ENCODE measurements at regions of chr17 and their contacts with region 1.

Region 1: DNA sequence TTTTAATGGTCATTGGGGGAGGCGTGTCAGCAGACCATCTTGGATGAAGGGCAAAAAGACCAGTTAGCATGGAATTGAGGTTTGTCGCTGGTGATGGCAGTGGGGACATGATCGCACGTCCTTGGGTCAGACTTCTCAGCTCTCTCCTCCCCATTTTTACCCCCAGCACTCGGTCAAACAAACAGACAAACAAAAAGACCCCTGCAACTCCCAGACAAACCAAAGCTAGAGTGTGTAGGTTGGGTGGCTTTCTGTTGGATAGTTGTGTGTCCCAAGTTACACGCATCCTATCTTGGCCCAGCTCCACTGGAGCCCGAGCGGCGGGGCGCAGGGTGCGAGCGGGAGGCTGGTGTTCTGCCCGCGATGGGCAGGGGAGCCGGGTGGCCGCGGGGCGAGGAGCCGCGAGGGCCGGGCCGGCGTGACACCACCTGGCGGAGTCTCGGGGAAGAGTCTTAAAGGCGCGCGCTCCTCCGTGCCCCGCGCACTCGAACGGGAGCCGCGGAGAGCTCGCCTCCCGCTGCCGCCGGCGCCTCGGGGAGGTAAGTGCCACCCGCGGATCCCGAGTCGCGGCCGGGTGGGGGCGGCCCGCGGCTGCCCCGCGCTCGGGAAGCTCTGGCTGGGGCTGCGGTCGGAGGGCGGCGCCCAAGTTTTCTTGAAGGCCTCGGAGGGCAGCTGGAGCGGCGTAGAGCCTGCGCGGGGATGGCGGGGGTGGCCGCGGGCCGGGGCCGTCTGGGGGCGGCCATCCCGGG is 18.5 kb upstream of the NTN1 start:
- DNase-seq: no peak
- H3K4me3 ChIP-seq: peak overlapping the region; percentile 26
- H3K27ac ChIP-seq: no peak overlapping the region
- H3K4me1 ChIP-seq: no peaks in the 10 kb centered on the region
- H3K27me3 ChIP-seq: peaks cover 38% of the 10 kb centered on the region
- CTCF ChIP-seq: no peak

Region 2: GRCh38 chr17:8954339-8954738 is 48.4 kb before region 1 on chr17:
- intact Hi-C with region 1: no loop called
- DNase-seq: peak; percentile 42
- H3K4me3 ChIP-seq: no peak overlapping the region
- H3K27ac ChIP-seq: no peak overlapping the region
- H3K4me1 ChIP-seq: no peaks in the 10 kb centered on the region
- H3K27me3 ChIP-seq: no peaks in the 10 kb centered on the region
- CTCF ChIP-seq: no peak

Region 3: DNA sequence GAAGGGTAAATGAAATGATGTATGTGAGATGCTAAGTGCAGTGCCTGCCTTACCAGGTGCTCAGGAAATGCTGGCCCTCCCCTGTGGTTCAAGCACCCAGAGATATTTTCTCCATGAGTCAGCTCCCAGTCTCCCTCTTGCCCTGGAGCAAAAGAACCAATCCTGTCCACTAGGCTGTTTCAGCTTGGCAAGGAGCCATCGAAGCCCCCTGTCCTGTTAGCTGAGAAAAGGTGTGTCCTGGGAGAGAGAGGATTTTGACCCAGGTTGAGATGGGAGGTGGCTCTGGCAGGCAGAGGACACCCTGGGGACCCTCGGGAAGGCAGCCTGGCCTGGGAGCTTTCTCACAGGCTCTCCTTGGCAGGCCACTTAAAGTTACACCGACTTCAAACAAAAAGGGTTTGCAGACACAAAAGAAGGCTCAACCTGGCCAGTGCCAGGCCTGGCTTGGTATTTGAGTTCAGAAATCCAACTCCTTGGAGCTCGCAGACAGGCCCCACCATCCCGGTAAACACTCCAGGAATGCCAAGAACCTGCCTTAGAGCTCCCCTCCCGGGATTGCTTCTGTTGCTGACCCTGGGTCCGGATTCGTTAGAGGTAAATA is 48.1 kb after region 1 on chr17:
- intact Hi-C with region 1: no loop called
- DNase-seq: no peak
- H3K4me3 ChIP-seq: no peak overlapping the region
- H3K27ac ChIP-seq: no peak overlapping the region
- H3K4me1 ChIP-seq: no peaks in the 10 kb centered on the region
- H3K27me3 ChIP-seq: no peaks in the 10 kb centered on the region
- CTCF ChIP-seq: no peak

Region 4: GRCh38 chr17:9150446-9151090 is 147.8 kb after region 1 on chr17:
- intact Hi-C with region 1: loop called (anchors 10 kb)
- DNase-seq: no peak
- H3K4me3 ChIP-seq: no peak overlapping the region
- H3K27ac ChIP-seq: peak overlapping the region; percentile 33
- H3K4me1 ChIP-seq: no peaks in the 10 kb centered on the region
- H3K27me3 ChIP-seq: no peaks in the 10 kb centered on the region
- CTCF ChIP-seq: no peak

Measured in colonic mucosa (tissue), 4 donors.